ENCODE measurements at regions of chr2 and their contacts with region 1.

Region 1: GRCh38 chr2:54106631-54107454 is 8.6 kb upstream of the ACYP2 start:
- DNase-seq: no peak
- ATAC-seq: peak; percentile 88

Region 2: DNA sequence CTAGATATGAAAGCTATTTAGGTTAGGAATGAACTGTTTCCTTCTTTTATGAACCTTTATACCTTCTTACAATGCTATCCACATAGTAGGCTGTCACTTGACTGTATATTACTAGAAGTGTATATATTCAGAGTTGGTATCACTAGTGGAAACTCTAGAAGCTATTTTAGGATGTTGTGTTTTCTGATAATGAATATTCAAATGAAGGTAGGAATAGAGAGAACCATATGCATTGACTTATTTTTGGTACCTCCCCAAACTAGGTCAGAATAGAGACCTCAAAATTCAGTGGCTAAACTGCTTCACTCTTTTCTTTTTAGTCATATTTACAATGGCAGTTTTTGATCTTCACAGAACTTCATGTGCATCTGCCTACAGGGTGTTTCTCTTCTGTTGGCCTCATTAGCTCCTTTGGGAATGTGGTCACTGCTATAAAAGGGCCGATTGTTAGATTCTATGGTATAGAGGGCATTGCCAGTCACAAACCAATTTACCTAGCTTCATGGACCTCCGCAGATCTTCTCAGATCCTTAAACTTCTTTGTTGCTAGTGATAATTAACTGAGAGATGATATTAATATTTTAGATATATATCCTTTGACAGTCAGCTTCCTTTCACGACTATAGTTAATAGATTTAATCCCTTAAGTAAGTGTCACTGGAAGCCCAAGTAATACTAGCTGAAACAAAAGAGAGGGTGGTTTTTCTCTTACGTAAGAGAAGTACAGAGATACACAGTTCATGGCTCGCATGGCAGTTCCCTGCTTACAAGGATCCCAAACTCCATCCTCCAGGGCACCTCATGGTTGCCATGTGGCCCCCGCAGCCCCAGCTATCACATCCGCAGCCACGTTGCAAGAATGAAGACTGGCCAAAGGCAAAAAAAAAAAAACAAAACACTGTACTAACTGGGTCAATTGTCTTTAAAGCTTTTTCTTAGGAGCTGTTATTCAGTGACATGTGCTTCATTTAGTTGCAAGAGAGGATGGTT is 88.2 kb after region 1 on chr2:
- intact Hi-C with region 1: no loop called
- DNase-seq: no peak
- ATAC-seq: no peak

Region 3: GRCh38 chr2:54295911-54296310 is 189.1 kb after region 1 on chr2:
- intact Hi-C with region 1: no loop called
- DNase-seq: no peak
- ATAC-seq: no peak

Region 4: GRCh38 chr2:54704688-54705605 is 598.1 kb after region 1 on chr2:
- intact Hi-C with region 1: loop called (anchors 5 kb)
- DNase-seq: no peak
- ATAC-seq: peak; percentile 69

Region 5: DNA sequence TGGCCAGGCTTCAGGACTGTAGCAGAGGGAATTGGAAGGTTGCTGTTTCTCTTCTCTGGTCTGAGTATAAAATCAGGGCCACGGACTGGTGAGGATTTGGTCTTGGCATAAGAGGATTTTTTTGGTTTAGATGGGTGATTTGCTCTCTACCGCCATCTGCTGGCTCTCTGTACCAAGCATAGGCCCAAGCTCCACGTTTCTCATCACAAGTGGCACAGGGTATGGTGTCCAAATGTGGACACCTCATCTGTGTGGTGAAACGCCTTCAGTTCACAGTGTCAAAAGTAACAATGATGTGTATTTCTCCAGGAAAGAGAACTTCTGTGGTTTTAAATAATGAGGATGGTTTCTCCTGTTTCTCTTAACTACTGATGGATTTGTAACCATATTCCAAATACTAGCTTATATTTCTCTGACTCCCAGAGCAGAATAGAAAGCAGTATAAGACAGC is 731.8 kb after region 1 on chr2:
- intact Hi-C with region 1: loop called (anchors 10 kb)
- DNase-seq: peak; percentile 51
- ATAC-seq: peak; percentile 93